ENCODE measurements at regions of chr13 and their contacts with region 1.

Region 1: DNA sequence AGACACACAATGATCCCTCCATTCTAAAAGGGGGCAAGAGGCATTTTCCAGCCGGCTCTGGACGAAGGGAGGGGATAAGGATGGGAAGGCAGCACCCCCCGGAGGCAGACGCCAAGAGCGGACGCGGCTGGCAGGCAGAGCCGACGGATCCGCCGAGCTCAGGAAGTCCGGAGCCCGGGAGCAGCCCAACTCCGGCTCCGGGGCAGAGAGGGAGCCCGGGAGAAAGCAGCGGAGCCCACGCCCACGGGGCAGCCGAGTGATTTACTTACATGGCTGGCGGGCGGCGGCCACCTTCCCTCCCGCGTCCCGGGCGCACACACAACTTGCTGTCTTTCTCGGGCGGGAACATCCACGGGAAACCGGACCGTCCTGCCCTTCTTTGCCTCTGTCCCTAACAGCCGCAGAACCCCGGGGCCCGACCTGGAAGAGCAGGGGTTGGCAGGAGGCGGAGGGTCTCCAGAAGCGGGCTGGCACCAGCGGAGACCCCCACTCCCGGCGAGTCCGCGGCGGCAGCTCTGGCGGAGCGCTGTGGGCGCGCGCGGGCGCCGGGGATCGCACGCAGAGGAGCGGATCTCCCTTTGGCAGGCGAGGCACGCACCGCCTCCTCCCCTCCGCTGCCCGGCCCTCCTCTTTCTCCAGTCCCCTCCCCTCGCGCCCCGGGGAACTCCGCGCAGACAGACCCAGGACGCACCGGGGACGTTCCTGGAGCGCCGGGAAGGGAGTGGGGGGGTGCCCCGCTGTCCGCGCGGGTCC is at the start of gene LHFPL6:
- DNase-seq: peak; percentile 82
- CTCF ChIP-seq: peak; percentile 37

Region 2: DNA sequence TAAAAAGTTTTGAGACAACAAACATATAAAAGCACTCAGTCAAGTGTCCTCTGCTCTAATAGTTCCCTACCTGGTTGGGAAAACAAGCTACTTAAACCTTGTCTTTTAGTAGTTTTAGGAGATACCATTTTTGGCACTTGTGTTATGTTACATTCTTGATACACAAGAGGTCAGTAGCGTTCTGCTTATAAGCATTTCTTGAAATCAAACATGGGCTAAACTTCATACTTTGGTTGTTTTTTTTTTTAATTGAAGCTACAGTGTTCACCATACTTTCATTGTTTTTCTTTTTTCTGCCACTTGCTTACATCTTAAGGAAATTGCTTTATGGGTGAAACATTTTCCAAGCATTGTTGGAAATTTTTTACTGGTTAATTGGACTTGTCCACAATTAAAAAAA is 551.6 kb before region 1 on chr13:
- in situ Hi-C with region 1: loop called (anchors 25 kb)
- DNase-seq: no peak
- CTCF ChIP-seq: peak; percentile 47

Region 3: DNA sequence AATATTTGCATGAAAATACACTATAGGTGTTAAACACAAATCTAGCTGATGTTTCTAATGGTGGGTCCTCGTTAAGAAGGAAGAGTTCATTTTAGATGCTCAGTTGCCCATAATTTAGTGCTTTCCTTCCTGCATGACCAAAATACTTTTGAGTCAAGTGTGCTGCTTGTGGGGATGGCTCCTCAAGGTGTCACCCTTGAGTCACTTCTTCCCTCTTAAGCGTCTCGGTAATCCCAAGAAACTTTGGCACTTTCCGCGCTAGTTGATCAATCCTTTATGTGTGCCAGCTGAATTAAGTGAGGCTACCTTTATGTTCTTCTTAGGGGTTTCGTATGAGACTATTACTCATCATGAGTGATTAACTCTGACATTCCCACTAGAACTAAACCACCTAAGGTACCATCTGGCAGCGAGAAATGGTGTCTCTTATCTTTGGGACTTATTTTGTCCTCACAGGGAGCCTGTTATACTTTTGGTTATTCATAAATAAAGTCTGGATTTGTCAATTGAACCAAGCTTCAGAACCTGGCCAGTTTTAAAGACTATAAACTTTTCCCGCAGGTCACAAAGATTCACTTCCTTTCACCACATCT is 457.8 kb before region 1 on chr13:
- in situ Hi-C with region 1: loop called (anchors 25 kb)
- DNase-seq: peak; percentile 66
- CTCF ChIP-seq: peak; percentile 81

Region 4: GRCh38 chr13:39942552-39943273 is 339.9 kb after region 1 on chr13:
- in situ Hi-C with region 1: no loop called
- DNase-seq: peak; percentile 59
- CTCF ChIP-seq: peak; percentile 99

Measured in GM13977 (cell line).